ENCODE measurements at regions of chr1 and their contacts with region 1.

Region 1: GRCh38 chr1:161872506-161872905 is 106.4 kb downstream of the ATF6 start:
- DNase-seq: no peak
- ATAC-seq: no peak
- H3K4me3 ChIP-seq: no peak overlapping the region
- H3K27ac ChIP-seq: no peak overlapping the region
- H3K4me1 ChIP-seq: peaks cover 0 to 5% (median 0%) of the 10 kb centered on the region in 12 donors
- H3K27me3 ChIP-seq: no peaks in the 10 kb centered on the region
- CTCF ChIP-seq: no peak
- POLR2A ChIP-seq: no peak

Region 2: DNA sequence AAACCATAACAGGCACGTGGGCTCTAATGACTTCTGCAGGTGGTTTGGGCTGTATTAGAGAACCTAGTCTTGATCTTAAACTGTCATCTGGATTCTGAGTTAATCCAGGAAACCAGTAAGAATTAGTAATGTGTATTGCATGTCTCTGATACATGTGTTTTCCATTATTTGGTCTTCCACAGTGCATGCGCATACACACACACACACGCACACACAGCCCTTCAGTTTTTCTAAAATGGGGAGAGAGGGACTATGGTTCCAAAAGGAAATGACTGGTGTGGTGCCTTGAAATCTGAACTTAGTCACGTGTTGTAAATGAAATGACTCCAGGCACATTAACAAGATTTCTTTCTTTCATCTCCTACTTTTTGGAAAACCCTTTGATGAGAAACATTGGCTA is 83.6 kb after region 1 on chr1:
- intact Hi-C with region 1: loop called in 1 of 10 experiments (anchors 5 kb)
- DNase-seq: peak in 1 of 5 donors; percentile 31
- ATAC-seq: peak in 3 of 4 donors; percentile 18 to 72 (median 61)
- H3K4me3 ChIP-seq: no peak overlapping the region
- H3K27ac ChIP-seq: no peak overlapping the region
- H3K4me1 ChIP-seq: peaks cover 0 to 43% (median under 1%) of the 10 kb centered on the region in 12 donors
- H3K27me3 ChIP-seq: no peaks in the 10 kb centered on the region
- CTCF ChIP-seq: no peak
- POLR2A ChIP-seq: no peak

Region 3: GRCh38 chr1:161973924-161974845 is 101.7 kb after region 1 on chr1:
- intact Hi-C with region 1: loop called in 1 of 10 experiments (anchors 10 kb)
- DNase-seq: peak in 4 of 5 donors; percentile 36 to 79 (median 68)
- ATAC-seq: peak; percentile 76 to 93 (median 86)
- H3K4me3 ChIP-seq: no peak overlapping the region
- H3K27ac ChIP-seq: peak overlapping the region in 8 of 12 donors; percentile 7 to 60 (median 36)
- H3K4me1 ChIP-seq: peaks cover 0 to 18% (median 11%) of the 10 kb centered on the region in 12 donors
- H3K27me3 ChIP-seq: no peaks in the 10 kb centered on the region
- CTCF ChIP-seq: no peak
- POLR2A ChIP-seq: no peak

Region 4: DNA sequence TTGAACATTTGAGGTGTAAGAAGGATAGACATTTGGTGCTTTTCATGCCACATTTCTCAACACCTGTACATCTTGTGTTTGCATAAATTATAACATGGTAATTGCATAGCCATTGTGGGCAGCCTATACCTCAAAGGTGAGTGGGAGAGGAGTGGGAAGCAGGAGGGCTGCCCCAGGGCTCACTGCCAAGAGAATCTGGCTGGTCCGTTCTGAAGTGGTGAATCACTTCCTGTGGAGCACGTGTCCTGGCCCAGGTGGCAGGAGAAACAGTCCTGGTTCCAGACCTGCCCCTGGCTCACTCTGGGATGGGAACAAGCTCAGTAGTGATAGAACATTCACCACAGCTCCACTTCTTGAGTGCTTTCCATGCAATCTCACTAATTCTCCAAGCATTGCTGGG is 162.7 kb after region 1 on chr1:
- intact Hi-C with region 1: loop called in 6 of 10 experiments (anchors 5 to 10 kb)
- DNase-seq: no peak
- ATAC-seq: no peak
- H3K4me3 ChIP-seq: no peak overlapping the region
- H3K27ac ChIP-seq: no peak overlapping the region
- H3K4me1 ChIP-seq: peaks cover 0 to 7% (median 0%) of the 10 kb centered on the region in 12 donors
- H3K27me3 ChIP-seq: peaks cover 0 to 5% (median 0%) of the 10 kb centered on the region in 9 donors
- CTCF ChIP-seq: no peak
- POLR2A ChIP-seq: no peak